ENCODE measurements at regions of chr15 and their contacts with region 1.

Region 1: DNA sequence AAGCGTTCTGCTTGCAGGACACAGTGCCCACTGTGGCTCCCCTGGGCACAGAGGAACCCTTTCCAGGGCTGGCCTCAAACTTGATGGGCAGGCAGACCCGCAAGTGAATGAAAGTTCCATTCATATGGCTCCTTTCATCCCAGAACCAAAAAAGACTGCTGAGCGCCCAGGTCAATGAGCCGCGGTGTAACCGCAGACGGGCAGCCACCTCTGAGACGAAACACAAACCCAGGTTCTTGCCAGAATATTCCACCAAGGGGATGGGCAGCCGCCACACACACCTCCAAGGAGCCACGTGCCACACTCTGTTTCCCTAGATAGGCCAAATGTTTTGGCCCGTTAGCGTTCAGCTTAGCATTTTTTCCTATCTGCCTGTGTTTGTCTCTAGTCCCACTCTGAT is 82.8 kb upstream of the IGF1R start:
- DNase-seq: no peak
- ATAC-seq: no peak

Region 2: GRCh38 chr15:98592136-98592535 is 26.6 kb after region 1 on chr15:
- intact Hi-C with region 1: loop called (anchors 1 kb)
- DNase-seq: no peak
- ATAC-seq: no peak